A673 (cell line): ENCODE measurements at regions of chr7 and their contacts with region 1.

Region 1: DNA sequence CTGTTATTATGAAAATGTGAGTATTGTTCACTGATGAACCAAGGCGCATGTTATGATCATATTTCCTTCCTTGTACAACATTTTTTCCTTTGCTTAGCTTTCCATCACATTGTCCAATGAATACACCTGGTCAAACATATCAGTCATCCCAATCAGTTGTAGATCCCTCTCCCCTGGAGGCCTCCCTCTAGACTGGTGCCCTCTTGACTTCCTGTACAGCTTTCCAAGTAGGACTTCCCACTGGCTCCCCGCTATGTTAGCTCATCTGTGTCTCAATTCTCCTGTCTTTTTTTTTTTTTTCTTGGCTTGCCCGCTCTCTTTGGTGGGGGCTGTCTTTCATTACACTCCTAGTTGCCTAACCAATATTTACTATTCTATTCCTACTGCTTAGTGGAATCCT is 214.2 kb upstream of the NPY start:
- DNase-seq: no peak
- H3K4me3 ChIP-seq: no peak overlapping the region
- H3K27ac ChIP-seq: no peak overlapping the region
- H3K4me1 ChIP-seq: peaks cover 17% of the 10 kb centered on the region
- H3K27me3 ChIP-seq: no peaks in the 10 kb centered on the region
- CTCF ChIP-seq: no peak

Region 2: DNA sequence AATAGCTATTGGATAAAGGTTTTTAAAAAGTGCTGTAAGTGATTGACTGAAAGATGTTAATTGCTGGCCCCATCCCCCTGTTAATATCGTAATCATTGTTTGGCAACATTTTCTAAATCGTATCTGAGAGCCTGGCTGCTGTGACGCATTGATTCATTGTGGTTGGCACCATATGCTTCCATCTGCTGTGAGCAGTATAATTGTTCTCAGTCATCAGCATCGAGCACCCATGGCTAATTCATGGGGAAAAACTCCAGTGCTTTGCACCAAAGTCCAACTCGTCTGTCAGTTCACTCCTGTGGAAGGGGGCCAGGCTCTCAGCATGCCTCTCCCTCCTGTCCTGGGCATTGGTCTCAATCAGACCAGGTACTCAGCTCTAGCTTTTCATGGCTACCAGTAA is 154.5 kb before region 1 on chr7:
- CTCF ChIA-PET with region 1: no interaction called
- POLR2A ChIA-PET with region 1: no interaction called
- intact Hi-C with region 1: no loop called
- DNase-seq: no peak
- H3K4me3 ChIP-seq: no peak overlapping the region
- H3K27ac ChIP-seq: no peak overlapping the region
- H3K4me1 ChIP-seq: no peaks in the 10 kb centered on the region
- H3K27me3 ChIP-seq: no peaks in the 10 kb centered on the region
- CTCF ChIP-seq: no peak

Region 3: DNA sequence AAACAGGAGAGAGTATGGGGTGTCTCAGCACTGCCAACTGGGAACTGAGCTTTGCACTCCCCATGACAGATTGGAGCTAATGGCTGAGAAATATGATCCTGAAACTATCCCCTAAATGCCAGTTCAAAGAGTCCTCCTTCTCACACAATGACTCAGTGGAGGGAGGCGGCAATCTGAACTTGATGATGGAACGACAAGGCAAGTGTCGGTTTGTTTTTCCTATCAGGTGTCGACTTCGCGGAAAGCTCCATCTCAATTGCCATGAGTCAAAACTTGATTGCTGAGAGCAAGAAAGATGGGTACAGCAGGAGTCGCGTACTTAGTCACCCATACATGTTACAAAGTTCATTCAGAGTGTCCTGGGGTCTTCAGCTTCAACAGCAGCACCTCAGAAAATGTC is 266.7 kb after region 1 on chr7:
- CTCF ChIA-PET with region 1: no interaction called
- POLR2A ChIA-PET with region 1: interaction called, 13 read pairs
- intact Hi-C with region 1: no loop called
- DNase-seq: no peak
- H3K4me3 ChIP-seq: no peak overlapping the region
- H3K27ac ChIP-seq: no peak overlapping the region
- H3K4me1 ChIP-seq: no peaks in the 10 kb centered on the region
- H3K27me3 ChIP-seq: no peaks in the 10 kb centered on the region
- CTCF ChIP-seq: no peak